Activated T-helper 1 cell treated with anti-CD3 and anti-CD28 coated beads, Interleukin-12 subunit alpha, Interleukin-12 subunit beta, Interleukin-2, Interleukin-4 antibody, amounts not matched to agents 30 ng/mL and 10 ng/mL and 1 ng/mL, durations not matched to agents 14 hours and 24 hours and 36 hours (primary cell): ENCODE measurements at regions of chr18 and their contacts with region 1.

Region 1: GRCh38 chr18:22933206-22933957 is at the start of gene RBBP8:
- DNase-seq: peak; percentile 85
- H3K4me3 Mint-ChIP-seq: peak within 1 kb of the TSS; percentile 98
- H3K27ac Mint-ChIP-seq: peak within 1 kb of the TSS; percentile 95
- H3K4me1 Mint-ChIP-seq: peaks cover 41% of the 10 kb centered on the region
- H3K27me3 Mint-ChIP-seq: peaks cover 3% of the 10 kb centered on the region
- total RNA-seq, gene RBBP8: 93.4 and 95.1 TPM in 2 replicates

Region 2: GRCh38 chr18:21740724-21741510 is 1192.5 kb before region 1 on chr18 and contains the start of gene MIB1:
- intact Hi-C with region 1: loop called (anchors 5 kb)
- DNase-seq: no peak
- H3K4me3 Mint-ChIP-seq: peak within 1 kb of the TSS; percentile 93
- H3K27ac Mint-ChIP-seq: peak within 1 kb of the TSS; percentile 94
- H3K4me1 Mint-ChIP-seq: peaks cover 45% of the 10 kb centered on the region
- H3K27me3 Mint-ChIP-seq: peaks cover 18% of the 10 kb centered on the region
- total RNA-seq, gene MIB1: 29.8 and 31.7 TPM in 2 replicates

Region 3: DNA sequence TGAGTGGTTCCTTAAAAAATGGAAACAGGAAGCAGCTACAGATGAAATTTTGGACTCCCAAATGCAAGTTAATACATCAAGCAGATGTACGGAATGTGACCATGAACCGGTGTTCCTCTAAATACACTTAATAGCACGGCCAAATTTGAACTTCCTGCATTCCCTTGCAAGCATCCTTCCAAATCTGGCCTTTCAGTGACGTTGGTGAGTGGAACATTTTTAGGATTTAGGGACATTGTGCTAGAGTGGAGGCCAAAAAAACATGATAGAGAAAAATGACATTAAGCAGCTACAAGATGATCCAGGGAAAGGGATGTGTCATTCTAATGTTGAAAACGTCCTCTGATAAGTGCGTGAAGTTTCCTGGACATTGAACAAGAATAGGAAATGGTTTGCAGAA is 577.8 kb before region 1 on chr18:
- intact Hi-C with region 1: no loop called
- DNase-seq: no peak
- H3K4me3 Mint-ChIP-seq: no peak overlapping the region
- H3K27ac Mint-ChIP-seq: no peak overlapping the region
- H3K4me1 Mint-ChIP-seq: no peaks in the 10 kb centered on the region
- H3K27me3 Mint-ChIP-seq: peaks cover 7% of the 10 kb centered on the region

Region 4: GRCh38 chr18:22848618-22849017 is 84.8 kb before region 1 on chr18:
- intact Hi-C with region 1: no loop called
- DNase-seq: no peak
- H3K4me3 Mint-ChIP-seq: no peak overlapping the region
- H3K27ac Mint-ChIP-seq: no peak overlapping the region
- H3K4me1 Mint-ChIP-seq: no peaks in the 10 kb centered on the region
- H3K27me3 Mint-ChIP-seq: peaks cover 23% of the 10 kb centered on the region

Region 5: GRCh38 chr18:22977847-22978701 is 44.7 kb after region 1 on chr18:
- intact Hi-C with region 1: loop called (anchors 1 kb)
- DNase-seq: no peak
- H3K4me3 Mint-ChIP-seq: no peak overlapping the region
- H3K27ac Mint-ChIP-seq: peak overlapping the region; percentile 7
- H3K4me1 Mint-ChIP-seq: peaks cover 18% of the 10 kb centered on the region
- H3K27me3 Mint-ChIP-seq: no peaks in the 10 kb centered on the region

Region 6: GRCh38 chr18:23131693-23132319 is 198.4 kb after region 1 on chr18:
- intact Hi-C with region 1: loop called (anchors 5 kb)
- DNase-seq: peak; percentile 35
- H3K4me3 Mint-ChIP-seq: no peak overlapping the region
- H3K27ac Mint-ChIP-seq: no peak overlapping the region
- H3K4me1 Mint-ChIP-seq: peaks cover 20% of the 10 kb centered on the region
- H3K27me3 Mint-ChIP-seq: peaks cover 22% of the 10 kb centered on the region

Region 7: DNA sequence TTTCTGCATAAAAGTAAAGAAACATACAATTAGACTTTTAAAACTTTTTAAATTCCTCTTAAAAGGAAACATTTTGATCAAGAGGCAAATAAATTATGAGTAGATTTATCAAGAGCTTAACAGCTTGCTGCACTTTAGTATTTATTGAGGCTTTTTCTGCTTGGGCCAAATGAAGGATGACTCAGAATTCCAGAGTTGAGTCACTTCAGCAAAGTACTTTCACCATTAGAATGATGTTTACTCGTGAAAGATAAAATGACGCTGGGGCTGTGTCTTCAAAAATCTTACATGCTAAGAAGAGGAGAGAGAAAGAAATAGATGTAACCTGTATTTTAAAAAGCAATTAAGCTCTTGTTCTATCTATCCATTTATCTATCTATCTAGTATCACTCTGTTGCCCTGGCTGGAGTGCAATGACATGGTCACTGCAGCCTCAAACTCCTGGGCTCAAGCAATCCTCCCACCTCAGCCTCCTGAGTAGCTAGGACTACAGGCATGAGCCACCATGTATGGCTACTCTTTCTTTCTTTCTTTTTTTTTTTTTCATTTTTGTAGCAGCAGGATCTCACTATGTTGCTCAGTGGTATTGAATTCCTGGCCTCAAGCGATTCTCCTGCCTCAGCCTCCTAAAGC is 444.4 kb after region 1 on chr18:
- intact Hi-C with region 1: loop called (anchors 5 kb)
- DNase-seq: no peak
- H3K4me3 Mint-ChIP-seq: no peak overlapping the region
- H3K27ac Mint-ChIP-seq: peak overlapping the region; percentile 72
- H3K4me1 Mint-ChIP-seq: peaks cover 11% of the 10 kb centered on the region
- H3K27me3 Mint-ChIP-seq: peaks cover 7% of the 10 kb centered on the region

Region 8: DNA sequence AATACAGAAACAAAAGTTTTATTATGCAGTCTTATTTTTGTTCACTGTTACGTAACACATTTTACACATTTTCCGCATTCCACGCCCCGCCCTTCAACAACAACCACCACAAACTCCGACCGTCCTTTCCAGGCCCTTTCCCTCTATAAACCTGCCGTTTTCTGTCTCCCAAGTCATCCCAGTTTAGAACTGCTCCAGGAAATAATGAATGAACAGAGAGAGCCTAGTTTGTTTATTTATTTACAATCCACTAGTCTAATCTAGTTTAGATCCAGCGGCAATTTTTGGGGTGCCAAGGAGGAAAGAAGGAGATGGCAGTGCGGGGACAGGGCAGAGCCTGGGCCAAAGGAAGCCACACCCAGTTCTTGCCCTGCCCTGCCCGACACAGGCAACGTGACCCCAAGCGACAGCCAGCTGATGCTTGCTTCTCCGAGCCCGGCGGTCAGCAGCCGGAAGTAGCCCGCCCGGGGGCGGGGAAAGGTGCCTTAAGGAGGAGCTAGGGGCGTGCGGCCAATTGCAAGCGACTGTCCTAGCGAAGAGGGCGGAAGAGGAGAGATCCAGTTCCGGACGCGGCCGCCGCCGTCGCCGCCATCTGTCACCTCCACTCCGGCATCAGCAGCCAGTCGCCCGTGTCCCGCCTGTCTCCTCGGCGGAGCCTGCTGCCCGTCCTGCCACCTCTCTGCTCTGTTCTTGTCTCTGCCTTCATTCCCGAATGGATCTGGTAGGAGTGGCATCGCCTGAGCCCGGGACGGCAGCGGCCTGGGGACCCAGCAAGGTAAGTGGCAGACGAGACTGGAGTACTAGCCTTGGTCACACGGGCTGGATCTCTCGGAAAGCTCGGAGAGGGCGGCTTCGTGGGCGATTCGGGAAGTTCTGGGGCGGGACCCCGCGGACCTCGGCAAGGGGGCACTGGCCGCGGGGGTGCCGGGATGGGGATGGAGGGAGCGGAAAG is 519.6 kb after region 1 on chr18 and contains the start of gene RIOK3:
- intact Hi-C with region 1: loop called (anchors 1 kb)
- DNase-seq: peak; percentile 94
- H3K4me3 Mint-ChIP-seq: peak within 1 kb of the TSS; percentile 97
- H3K27ac Mint-ChIP-seq: peak within 1 kb of the TSS; percentile 92
- H3K4me1 Mint-ChIP-seq: peaks cover 39% of the 10 kb centered on the region
- H3K27me3 Mint-ChIP-seq: no peaks in the 10 kb centered on the region
- total RNA-seq, gene RIOK3: 40.8 and 52.2 TPM in 2 replicates